PC-3 (cell line): ENCODE measurements at regions of chr2 and their contacts with region 1.

Region 1: GRCh38 chr2:11863513-11864328 is 117.3 kb downstream of the LPIN1 start:
- DNase-seq: peak; percentile 93
- ATAC-seq: peak; percentile 96
- H3K4me3 ChIP-seq: no peak overlapping the region
- H3K27ac ChIP-seq: peak overlapping the region; percentile 44
- H3K4me1 ChIP-seq: peaks cover 10% of the 10 kb centered on the region
- H3K27me3 ChIP-seq: no peaks in the 10 kb centered on the region
- CTCF ChIP-seq: peak; percentile 94

Region 2: GRCh38 chr2:11802782-11803191 is 60.9 kb before region 1 on chr2:
- CTCF ChIA-PET with region 1: no interaction called
- POLR2A ChIA-PET with region 1: no interaction called
- intact Hi-C with region 1: no loop called
- DNase-seq: no peak
- ATAC-seq: no peak
- H3K4me3 ChIP-seq: no peak overlapping the region
- H3K27ac ChIP-seq: no peak overlapping the region
- H3K4me1 ChIP-seq: no peaks in the 10 kb centered on the region
- H3K27me3 ChIP-seq: no peaks in the 10 kb centered on the region
- CTCF ChIP-seq: no peak

Region 3: DNA sequence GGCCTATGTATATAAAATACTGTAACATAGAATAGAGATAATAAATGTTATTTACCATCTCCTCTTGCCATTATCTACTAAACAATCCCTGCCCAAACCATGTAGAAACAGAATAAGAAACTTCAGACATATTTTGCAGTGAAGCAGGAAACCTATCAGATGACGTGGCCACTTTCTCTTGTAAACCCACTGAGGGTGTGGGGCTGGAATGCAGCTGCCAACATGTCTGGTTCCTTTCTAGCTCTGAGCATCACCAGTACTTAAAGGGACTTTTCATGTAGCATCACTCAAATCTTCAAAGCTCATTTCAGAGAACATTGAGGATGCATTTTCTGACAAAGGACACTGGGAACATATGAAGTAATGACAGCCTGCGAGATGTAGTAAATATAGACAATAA is 134.5 kb after region 1 on chr2:
- CTCF ChIA-PET with region 1: no interaction called
- POLR2A ChIA-PET with region 1: no interaction called
- intact Hi-C with region 1: no loop called
- DNase-seq: peak; percentile 49
- ATAC-seq: peak; percentile 75
- H3K4me3 ChIP-seq: no peak overlapping the region
- H3K27ac ChIP-seq: no peak overlapping the region
- H3K4me1 ChIP-seq: peaks cover 25% of the 10 kb centered on the region; the same call in 1 of the 2 replicates
- H3K27me3 ChIP-seq: no peaks in the 10 kb centered on the region
- CTCF ChIP-seq: no peak

Region 4: DNA sequence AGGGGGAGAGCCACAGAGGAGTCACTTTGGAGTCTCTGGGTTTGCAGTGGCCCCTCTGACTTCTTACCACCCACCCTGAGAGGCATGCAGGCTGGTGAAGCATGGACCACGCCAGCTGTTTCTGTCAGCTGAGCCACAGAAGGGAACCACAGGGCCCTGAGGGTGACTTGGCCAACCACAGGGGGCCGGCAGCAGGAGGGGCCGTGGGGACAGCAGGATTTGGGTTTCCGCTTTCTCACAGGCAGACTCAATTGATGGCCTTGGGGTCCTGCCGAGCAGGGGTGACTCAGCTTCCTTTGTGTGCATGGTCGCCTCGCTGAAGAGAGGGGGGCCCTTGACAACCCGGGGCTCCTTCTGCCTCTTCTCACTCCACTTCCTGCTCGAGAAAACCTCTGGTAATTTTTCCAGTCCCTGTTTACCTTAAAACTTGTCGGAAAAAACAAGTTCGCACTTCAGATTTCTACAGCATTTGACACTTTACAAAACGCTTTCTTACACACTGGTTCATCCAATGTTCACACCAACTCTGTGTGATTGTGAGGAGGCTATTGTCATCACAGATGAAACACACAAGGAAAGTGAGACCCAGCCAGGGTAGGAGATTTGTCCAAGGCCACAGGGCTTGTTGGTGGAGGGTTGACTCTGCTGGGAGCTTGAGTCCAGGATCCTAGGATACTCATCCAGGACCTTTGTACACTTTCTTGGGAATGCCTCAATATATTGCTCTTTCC is 193.9 kb after region 1 on chr2:
- CTCF ChIA-PET with region 1: no interaction called
- POLR2A ChIA-PET with region 1: no interaction called
- intact Hi-C with region 1: loop called (anchors 10 kb)
- DNase-seq: no peak
- ATAC-seq: no peak
- H3K4me3 ChIP-seq: no peak overlapping the region
- H3K27ac ChIP-seq: no peak overlapping the region
- H3K4me1 ChIP-seq: peaks cover 18% of the 10 kb centered on the region
- H3K27me3 ChIP-seq: no peaks in the 10 kb centered on the region
- CTCF ChIP-seq: no peak

Region 5: GRCh38 chr2:12176623-12177454 is 313.1 kb after region 1 on chr2:
- CTCF ChIA-PET with region 1: no interaction called
- POLR2A ChIA-PET with region 1: no interaction called
- intact Hi-C with region 1: loop called (anchors 1 kb)
- DNase-seq: peak; percentile 88
- ATAC-seq: peak; percentile 99
- H3K4me3 ChIP-seq: no peak overlapping the region
- H3K27ac ChIP-seq: peak overlapping the region; percentile 22
- H3K4me1 ChIP-seq: peaks cover 17% of the 10 kb centered on the region
- H3K27me3 ChIP-seq: no peaks in the 10 kb centered on the region
- CTCF ChIP-seq: no peak

Region 6: GRCh38 chr2:12456293-12457151 is 592.8 kb after region 1 on chr2:
- CTCF ChIA-PET with region 1: no interaction called
- POLR2A ChIA-PET with region 1: no interaction called
- intact Hi-C with region 1: loop called (anchors 10 kb)
- DNase-seq: peak; percentile 92
- ATAC-seq: peak; percentile 97
- H3K4me3 ChIP-seq: peak overlapping the region; percentile 61
- H3K27ac ChIP-seq: peak overlapping the region; percentile 84
- H3K4me1 ChIP-seq: peaks cover 15% of the 10 kb centered on the region
- H3K27me3 ChIP-seq: no peaks in the 10 kb centered on the region
- CTCF ChIP-seq: no peak

Region 7: DNA sequence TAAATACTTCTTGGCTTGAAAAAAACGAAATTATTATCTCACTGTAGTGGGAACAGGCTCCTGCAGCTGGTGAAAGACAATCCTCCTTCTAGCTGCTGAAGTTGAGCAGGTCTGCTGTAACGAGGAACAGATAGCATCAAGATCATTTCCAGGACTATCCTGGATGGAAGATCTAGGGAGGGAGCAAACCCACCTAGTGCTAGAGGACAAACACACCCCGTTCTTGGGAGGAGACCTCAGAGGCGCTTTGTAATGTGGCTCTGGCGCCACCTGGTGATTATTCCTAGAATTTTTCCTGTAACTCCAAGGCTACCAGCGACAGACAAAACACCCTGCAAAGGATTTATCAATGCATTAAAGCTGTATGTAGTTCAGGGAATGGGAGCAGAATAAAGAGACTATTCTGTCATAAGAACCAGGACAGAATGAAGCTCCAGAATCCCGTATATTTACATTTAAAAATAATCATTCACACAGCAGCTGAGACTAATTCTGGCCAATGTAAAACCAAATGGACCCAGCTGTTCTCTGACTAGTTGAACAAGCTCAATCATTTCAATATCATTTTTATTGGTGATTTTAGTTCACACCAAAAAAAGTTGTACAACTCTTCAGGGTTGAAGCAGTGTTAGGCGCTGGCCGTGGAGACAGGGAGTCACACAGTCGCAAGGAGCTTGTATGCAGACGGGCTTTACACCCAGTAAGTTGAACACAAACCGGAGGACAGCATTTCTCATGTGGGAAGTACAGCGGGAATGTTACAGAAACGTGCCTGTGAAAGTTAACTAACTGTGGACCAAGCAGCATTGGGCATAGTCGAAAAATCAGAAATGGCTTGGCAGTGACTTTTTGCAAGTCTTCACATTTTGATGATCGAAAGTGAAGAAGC is 1143.4 kb after region 1 on chr2:
- CTCF ChIA-PET with region 1: no interaction called
- POLR2A ChIA-PET with region 1: no interaction called
- intact Hi-C with region 1: loop called (anchors 1 kb)
- DNase-seq: peak; percentile 87
- ATAC-seq: peak; percentile 95
- H3K4me3 ChIP-seq: peak overlapping the region; percentile 62
- H3K27ac ChIP-seq: no peak overlapping the region
- H3K4me1 ChIP-seq: peaks cover 7% of the 10 kb centered on the region
- H3K27me3 ChIP-seq: no peaks in the 10 kb centered on the region
- CTCF ChIP-seq: peak; percentile 89